Head of caudate nucleus (tissue), 42 donors: ENCODE measurements at regions of chr4 and their contacts with region 1.

Region 1: DNA sequence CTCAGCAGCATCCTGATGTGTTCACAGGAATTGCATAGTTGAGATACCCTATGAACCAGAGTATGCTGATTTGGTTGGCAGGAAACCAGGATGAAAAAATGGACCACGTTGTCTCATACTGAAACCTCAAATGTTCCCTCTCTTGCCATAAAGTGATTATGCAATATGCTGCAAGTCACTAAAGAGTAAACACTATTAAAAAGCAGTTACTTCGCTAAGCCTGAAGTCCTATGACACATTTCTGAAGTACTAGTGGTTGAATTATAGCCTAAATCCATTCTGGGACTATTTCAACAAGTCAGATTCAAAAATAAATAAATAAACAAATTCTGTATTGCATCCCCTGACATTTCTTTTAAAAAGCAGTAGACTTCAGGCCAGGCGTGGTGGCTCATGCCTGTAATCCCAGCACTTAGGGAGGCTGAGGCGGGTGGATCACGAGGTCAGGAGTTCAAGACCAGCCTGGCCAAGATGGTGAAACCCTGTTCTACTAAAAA is 106.0 kb upstream of the NAP1L5 start:
- DNase-seq: peak in 2 of 42 donors; percentile 20 to 23

Region 2: DNA sequence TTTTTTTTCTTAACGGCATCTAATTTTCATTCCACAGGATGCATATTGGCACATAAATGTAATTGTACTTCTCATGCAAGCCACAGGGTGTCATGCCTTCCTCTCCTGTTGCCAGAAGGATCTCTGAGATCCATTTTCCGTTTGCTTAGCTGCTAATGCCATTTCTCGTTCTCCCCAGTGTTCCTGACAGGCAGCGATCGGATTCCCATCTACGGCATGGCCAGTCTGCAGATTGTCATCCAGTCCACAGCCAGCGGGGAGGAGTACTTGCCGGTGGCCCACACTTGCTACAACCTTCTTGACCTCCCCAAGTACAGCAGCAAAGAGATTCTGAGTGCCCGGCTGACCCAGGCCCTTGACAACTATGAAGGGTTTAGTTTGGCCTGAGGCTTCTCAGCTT is 97.1 kb before region 1 on chr4:
- intact Hi-C with region 1: loop called (anchors 10 kb)
- DNase-seq: peak in 32 of 42 donors; percentile 16 to 83 (median 55)

Region 3: GRCh38 chr4:88759039-88759894 is 44.4 kb before region 1 on chr4:
- intact Hi-C with region 1: no loop called
- DNase-seq: peak in 1 of 42 donors; percentile 24